ENCODE measurements at regions of chr11 and their contacts with region 1.

Region 1: DNA sequence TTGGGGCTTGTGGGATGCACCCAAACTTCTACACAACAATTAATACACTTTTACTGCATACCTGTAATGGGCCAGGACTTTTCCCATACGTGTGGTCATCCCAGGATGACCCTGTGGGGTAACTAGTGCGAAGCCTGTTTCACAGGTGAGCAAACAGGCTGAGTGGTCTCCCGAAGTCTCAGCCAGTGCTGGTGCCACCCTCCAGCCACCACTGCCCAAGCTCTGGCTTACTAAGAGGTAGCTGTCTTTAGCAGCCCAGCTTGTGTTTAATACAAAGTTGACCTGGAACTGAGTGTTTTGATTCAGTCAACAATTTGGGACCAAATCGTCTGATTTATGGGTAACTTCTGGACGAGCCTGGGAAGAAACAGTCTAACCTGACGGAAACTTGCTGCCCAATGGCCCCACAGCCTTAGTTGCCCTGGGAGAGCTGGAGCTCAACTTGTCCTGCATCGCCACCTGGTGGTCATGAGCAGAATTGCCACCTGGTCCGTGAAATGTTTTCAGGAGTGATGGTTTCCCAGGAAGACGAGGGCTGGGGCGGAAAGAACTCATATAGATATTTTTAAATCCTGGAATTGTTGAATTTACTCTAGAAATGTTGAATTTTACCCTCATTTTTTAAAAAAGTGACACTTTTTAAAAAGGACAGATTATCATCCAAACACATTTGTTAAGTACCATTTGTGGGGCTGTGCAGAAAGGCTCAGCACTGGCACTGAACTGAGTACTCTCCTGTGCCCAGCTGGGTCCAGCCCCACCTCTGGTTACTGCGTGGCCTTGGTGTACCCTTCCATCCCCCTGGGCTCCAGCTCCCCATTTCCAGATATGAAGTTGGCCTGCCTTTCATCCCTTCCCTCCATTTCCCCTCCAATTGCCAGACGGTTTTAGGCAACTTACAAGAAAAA is 95.5 kb upstream of the PARVA start:
- DNase-seq: peak in 1 of 2 experiments; percentile 68
- H3K4me3 ChIP-seq: no peak overlapping the region
- H3K27ac ChIP-seq: no peak overlapping the region
- H3K4me1 ChIP-seq: peaks cover 34% of the 10 kb centered on the region
- H3K27me3 ChIP-seq: no peaks in the 10 kb centered on the region
- CTCF ChIP-seq: peak; percentile 94

Region 2: GRCh38 chr11:11841723-11842420 is 440.0 kb before region 1 on chr11 and contains the start of gene USP47:
- CTCF ChIA-PET with region 1: no interaction called
- POLR2A ChIA-PET with region 1: no interaction called
- intact Hi-C with region 1: loop called (anchors 10 kb)
- DNase-seq: peak; percentile 57 to 81
- H3K4me3 ChIP-seq: peak within 1 kb of the TSS; percentile 93
- H3K27ac ChIP-seq: peak within 1 kb of the TSS; percentile 76
- H3K4me1 ChIP-seq: peaks cover 40% of the 10 kb centered on the region
- H3K27me3 ChIP-seq: no peaks in the 10 kb centered on the region
- CTCF ChIP-seq: peak; percentile 56
- total RNA-seq, gene USP47: 22.4 and 24.2 TPM in 2 replicates

Region 3: DNA sequence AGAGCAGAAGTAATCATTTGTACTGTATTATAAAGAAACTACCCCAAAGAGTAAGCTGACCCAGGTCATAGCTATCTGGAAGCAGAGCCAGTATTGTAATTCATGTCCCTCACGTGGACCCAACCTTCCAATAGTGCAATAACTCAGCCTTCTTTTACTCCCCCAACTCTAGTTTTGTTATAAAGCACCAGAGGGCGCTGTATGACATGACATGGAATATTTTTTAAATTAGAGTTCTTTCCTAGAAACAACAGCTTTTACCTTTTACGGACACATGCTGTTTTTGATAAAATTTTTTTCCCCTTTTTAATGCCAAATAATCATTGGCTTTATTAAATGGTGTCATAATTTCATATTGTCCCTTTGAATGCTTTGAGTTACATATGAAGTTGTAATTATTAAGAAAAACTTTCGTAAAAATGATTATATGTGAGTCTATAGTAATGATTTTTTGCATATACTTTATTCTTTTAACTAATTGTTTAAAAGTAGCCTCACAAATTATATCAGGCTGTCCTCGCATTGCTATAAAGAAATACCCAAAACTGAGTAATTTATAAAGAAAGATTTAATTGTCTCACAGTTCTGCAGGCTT is 350.3 kb before region 1 on chr11:
- CTCF ChIA-PET with region 1: interaction called, 3 read pairs
- POLR2A ChIA-PET with region 1: no interaction called
- intact Hi-C with region 1: loop called (anchors 2 kb)
- DNase-seq: peak in 1 of 2 experiments; percentile 2
- H3K4me3 ChIP-seq: no peak overlapping the region
- H3K27ac ChIP-seq: no peak overlapping the region
- H3K4me1 ChIP-seq: no peaks in the 10 kb centered on the region
- H3K27me3 ChIP-seq: no peaks in the 10 kb centered on the region
- CTCF ChIP-seq: peak; percentile 77

Region 4: GRCh38 chr11:12052676-12053605 is 228.9 kb before region 1 on chr11:
- CTCF ChIA-PET with region 1: interaction called, 9 read pairs
- POLR2A ChIA-PET with region 1: no interaction called
- intact Hi-C with region 1: loop called (anchors 1 kb)
- DNase-seq: no peak
- H3K4me3 ChIP-seq: no peak overlapping the region
- H3K27ac ChIP-seq: no peak overlapping the region
- H3K4me1 ChIP-seq: peaks cover 17% of the 10 kb centered on the region
- H3K27me3 ChIP-seq: no peaks in the 10 kb centered on the region
- CTCF ChIP-seq: no peak

Region 5: GRCh38 chr11:12110201-12110713 is 171.6 kb before region 1 on chr11 and contains the start of gene MICAL2:
- CTCF ChIA-PET with region 1: no interaction called
- POLR2A ChIA-PET with region 1: no interaction called
- intact Hi-C with region 1: loop called (anchors 5 kb)
- DNase-seq: peak; percentile 71 to 87
- H3K4me3 ChIP-seq: peak within 1 kb of the TSS; percentile 81
- H3K27ac ChIP-seq: peak within 1 kb of the TSS; percentile 41; the same call in 1 of the 2 replicates
- H3K4me1 ChIP-seq: peaks cover 20% of the 10 kb centered on the region
- H3K27me3 ChIP-seq: no peaks in the 10 kb centered on the region
- CTCF ChIP-seq: no peak
- total RNA-seq, gene MICAL2: 30.5 and 32.4 TPM in 2 replicates

Region 6: DNA sequence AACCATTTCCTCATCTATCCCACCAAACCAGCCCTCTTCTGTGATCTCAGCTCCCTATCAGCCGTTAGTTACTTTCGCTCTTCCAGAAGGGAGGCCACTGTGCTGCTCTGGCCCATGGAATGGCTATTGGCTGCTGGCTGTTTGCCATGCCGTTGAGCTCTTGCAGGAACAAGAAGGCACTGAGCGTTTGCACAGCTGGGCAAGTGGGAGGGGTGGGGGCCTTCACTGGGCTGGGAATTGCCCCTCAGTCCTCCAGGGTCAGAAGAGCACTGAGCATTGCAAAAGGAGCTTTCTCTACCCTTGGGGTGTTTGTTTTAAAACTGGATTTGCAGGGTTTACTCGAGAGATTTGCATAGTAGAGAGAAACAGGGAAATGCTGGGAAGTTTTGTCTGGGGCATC is 33.5 kb before region 1 on chr11:
- CTCF ChIA-PET with region 1: interaction called, 3 read pairs
- POLR2A ChIA-PET with region 1: interaction called, 3 read pairs
- intact Hi-C with region 1: loop called (anchors 5 kb)
- DNase-seq: peak; percentile 88 to 97
- H3K4me3 ChIP-seq: no peak overlapping the region
- H3K27ac ChIP-seq: peak overlapping the region; percentile 59
- H3K4me1 ChIP-seq: peaks cover 62% of the 10 kb centered on the region
- H3K27me3 ChIP-seq: no peaks in the 10 kb centered on the region
- CTCF ChIP-seq: no peak